ENCODE measurements at regions of chr20 and their contacts with region 1.

Region 1: DNA sequence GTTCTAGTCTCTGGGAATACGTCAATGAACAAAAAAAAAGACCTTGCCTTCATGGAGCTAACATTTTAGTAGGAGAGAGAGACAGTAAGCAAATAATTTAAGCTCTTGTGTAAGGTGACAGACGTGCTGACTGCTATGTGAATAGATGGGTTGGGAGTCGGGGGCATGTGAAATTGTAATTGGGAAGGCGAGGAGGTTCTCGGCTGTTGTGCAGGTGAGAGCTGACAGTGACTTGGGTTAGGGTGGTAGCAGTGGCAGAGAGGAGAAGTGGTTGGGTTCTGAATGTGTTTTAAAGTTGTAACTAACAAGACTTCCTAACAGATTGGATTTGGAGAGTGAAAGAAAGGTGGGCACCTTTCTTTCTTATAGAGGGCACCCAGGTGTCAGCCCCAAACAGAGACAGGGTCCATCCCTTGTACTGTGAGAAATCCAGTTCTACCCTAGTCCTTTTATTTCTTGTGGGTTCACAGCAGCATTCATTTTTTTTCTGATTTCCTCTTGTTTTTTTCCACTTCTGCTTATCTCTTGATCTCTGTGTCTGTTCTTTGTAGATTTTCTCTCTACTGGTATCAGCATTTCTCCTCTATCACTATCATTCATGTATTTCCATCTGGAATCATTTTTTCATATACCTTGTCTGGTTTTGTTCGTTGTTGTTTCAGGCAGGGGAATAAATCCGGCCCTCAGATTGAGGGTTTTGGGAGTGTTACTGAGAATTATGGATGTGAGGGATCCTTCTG is 15.4 kb upstream of the MYLK2 start:
- DNase-seq: no peak
- ATAC-seq: no peak
- H3K4me3 ChIP-seq: no peak overlapping the region
- H3K27ac ChIP-seq: no peak overlapping the region
- H3K4me1 ChIP-seq: no peaks in the 10 kb centered on the region
- H3K27me3 ChIP-seq: no peaks in the 10 kb centered on the region
- CTCF ChIP-seq: no peak

Region 2: GRCh38 chr20:32067234-32067821 is 263.6 kb after region 1 on chr20:
- CTCF ChIA-PET with region 1: interaction called, 10 read pairs
- POLR2A ChIA-PET with region 1: no interaction called
- in situ Hi-C with region 1: no loop called
- intact Hi-C with region 1: no loop called
- DNase-seq: no peak
- ATAC-seq: no peak
- H3K4me3 ChIP-seq: no peak overlapping the region
- H3K27ac ChIP-seq: no peak overlapping the region
- H3K4me1 ChIP-seq: no peaks in the 10 kb centered on the region
- H3K27me3 ChIP-seq: peaks cover 8% of the 10 kb centered on the region; the same call in 1 of the 2 replicates
- CTCF ChIP-seq: no peak